Right cardiac atrium (tissue), 5 donors: ENCODE measurements at regions of chr21 and their contacts with region 1.

Region 1: GRCh38 chr21:38913120-38913892 is 107.6 kb downstream of the ETS2 start:
- DNase-seq: peak; percentile 76 to 88 (median 86)
- ATAC-seq: peak; percentile 80 to 85
- H3K4me3 ChIP-seq: no peak overlapping the region
- H3K27ac ChIP-seq: peak overlapping the region; percentile 61
- H3K4me1 ChIP-seq: peaks cover 6% of the 10 kb centered on the region
- H3K27me3 ChIP-seq: no peaks in the 10 kb centered on the region

Region 2: GRCh38 chr21:38811257-38811656 is 102.0 kb before region 1 on chr21:
- intact Hi-C with region 1: loop called in 2 of 4 experiments (anchors 5 to 10 kb)
- DNase-seq: no peak
- ATAC-seq: no peak
- H3K4me3 ChIP-seq: peak overlapping the region; percentile 29
- H3K27ac ChIP-seq: peak overlapping the region; percentile 18
- H3K4me1 ChIP-seq: peaks cover 7% of the 10 kb centered on the region
- H3K27me3 ChIP-seq: no peaks in the 10 kb centered on the region

Region 3: GRCh38 chr21:38853421-38853919 is 59.8 kb before region 1 on chr21:
- intact Hi-C with region 1: loop called in 1 of 4 experiments (anchors 10 kb)
- DNase-seq: no peak
- ATAC-seq: peak in 1 of 2 donors; percentile 8
- H3K4me3 ChIP-seq: no peak overlapping the region
- H3K27ac ChIP-seq: no peak overlapping the region
- H3K4me1 ChIP-seq: no peaks in the 10 kb centered on the region
- H3K27me3 ChIP-seq: no peaks in the 10 kb centered on the region

Region 4: DNA sequence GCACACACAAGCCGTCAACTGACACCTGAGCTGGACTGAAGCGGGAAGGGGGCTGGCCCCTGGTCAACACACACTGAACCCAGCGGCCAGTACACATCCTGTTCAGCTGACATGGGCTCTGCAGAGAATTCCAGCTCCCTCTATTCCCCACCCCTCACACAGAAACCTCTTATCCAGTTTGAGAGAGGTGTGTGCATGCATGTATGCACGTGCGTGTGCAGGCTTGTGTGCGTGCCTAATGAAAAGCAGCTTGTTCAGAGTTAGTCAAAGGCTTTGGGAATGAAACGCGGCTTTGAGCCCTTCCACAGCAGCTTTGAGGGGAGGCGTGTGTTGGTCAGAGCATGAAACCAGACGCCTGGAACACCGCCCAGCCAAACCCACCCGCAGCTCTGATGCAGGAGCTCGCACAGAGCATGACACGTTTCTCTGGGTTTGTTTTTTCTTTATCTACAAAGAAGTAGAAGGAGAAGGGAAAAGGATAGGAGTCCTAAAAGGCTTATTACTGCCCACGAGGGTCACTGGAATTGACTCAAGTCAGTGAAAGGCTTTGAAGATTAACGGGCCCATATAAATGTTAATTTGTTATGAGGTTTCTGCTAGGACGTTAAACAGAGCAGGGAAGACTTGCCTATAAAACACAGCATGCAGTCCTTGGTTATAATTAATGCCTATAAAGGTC is 76.6 kb after region 1 on chr21:
- intact Hi-C with region 1: loop called in 1 of 4 experiments (anchors 5 kb)
- DNase-seq: peak in 2 of 3 donors; percentile 74 to 79
- ATAC-seq: peak; percentile 19 to 35
- H3K4me3 ChIP-seq: no peak overlapping the region
- H3K27ac ChIP-seq: peak overlapping the region; percentile 11
- H3K4me1 ChIP-seq: peaks cover 21% of the 10 kb centered on the region
- H3K27me3 ChIP-seq: no peaks in the 10 kb centered on the region